ENCODE measurements at regions of chr12 and their contacts with region 1.

Region 1: GRCh38 chr12:3202734-3203446 is 125.7 kb downstream of the TSPAN9 start:
- DNase-seq: peak; percentile 30
- H3K4me3 ChIP-seq: no peak overlapping the region
- H3K27ac ChIP-seq: no peak overlapping the region
- H3K4me1 ChIP-seq: peaks cover 14% of the 10 kb centered on the region
- H3K27me3 ChIP-seq: no peaks in the 10 kb centered on the region
- CTCF ChIP-seq: peak; percentile 82 to 85 (median 84)
- POLR2A ChIP-seq: no peak

Region 2: GRCh38 chr12:3073438-3074250 is 129.2 kb before region 1 on chr12:
- intact Hi-C with region 1: loop called (anchors 5 kb)
- DNase-seq: peak; percentile 84
- H3K4me3 ChIP-seq: no peak overlapping the region
- H3K27ac ChIP-seq: no peak overlapping the region
- H3K4me1 ChIP-seq: peaks cover 4% of the 10 kb centered on the region
- H3K27me3 ChIP-seq: no peaks in the 10 kb centered on the region
- CTCF ChIP-seq: peak; percentile 94 to 98 (median 96)
- POLR2A ChIP-seq: no peak

Region 3: GRCh38 chr12:3135522-3136461 is 67.1 kb before region 1 on chr12:
- intact Hi-C with region 1: loop called (anchors 2 kb)
- DNase-seq: peak; percentile 33
- H3K4me3 ChIP-seq: no peak overlapping the region
- H3K27ac ChIP-seq: no peak overlapping the region
- H3K4me1 ChIP-seq: peaks cover 3% of the 10 kb centered on the region
- H3K27me3 ChIP-seq: no peaks in the 10 kb centered on the region
- CTCF ChIP-seq: peak; percentile 67 to 88 (median 81)
- POLR2A ChIP-seq: no peak